Activated CD4-positive, alpha-beta T cell treated with anti-CD3 and anti-CD28 coated beads for 36 hours (primary cell): ENCODE measurements at regions of chr10 and their contacts with region 1.

Region 1: GRCh38 chr10:28709001-28709710 is 31.8 kb downstream of the BAMBI start:
- DNase-seq: no peak
- ATAC-seq: no peak
- H3K4me3 Mint-ChIP-seq: no peak overlapping the region
- H3K27ac Mint-ChIP-seq: no peak overlapping the region
- H3K4me1 Mint-ChIP-seq: no peaks in the 10 kb centered on the region
- H3K27me3 Mint-ChIP-seq: peaks cover 6% of the 10 kb centered on the region

Region 2: DNA sequence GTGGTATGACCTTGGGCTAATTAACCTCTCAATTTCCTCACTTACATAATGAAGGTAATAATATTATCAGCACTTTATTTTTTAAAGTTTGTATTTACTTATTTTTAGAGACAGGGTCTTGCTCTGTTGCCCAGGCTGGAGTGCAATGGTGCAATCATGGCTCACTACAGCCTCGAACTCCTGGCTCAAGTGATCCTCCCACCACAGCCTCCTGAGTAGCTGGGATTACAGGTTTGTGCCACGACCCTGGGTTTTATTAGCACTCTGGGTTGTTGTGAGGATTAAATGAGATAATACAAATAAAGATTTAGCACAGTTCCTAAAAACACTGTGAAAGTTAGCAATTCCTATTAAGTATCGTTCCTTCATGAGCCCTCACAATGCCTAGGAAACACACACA is 17.1 kb before region 1 on chr10:
- CTCF ChIA-PET with region 1: no interaction called
- POLR2A ChIA-PET with region 1: no interaction called
- intact Hi-C with region 1: loop called in 1 of 2 experiments (anchors 1 kb)
- DNase-seq: no peak
- ATAC-seq: no peak
- H3K4me3 Mint-ChIP-seq: no peak overlapping the region
- H3K27ac Mint-ChIP-seq: no peak overlapping the region
- H3K4me1 Mint-ChIP-seq: no peaks in the 10 kb centered on the region
- H3K27me3 Mint-ChIP-seq: peaks cover 16% of the 10 kb centered on the region

Region 3: DNA sequence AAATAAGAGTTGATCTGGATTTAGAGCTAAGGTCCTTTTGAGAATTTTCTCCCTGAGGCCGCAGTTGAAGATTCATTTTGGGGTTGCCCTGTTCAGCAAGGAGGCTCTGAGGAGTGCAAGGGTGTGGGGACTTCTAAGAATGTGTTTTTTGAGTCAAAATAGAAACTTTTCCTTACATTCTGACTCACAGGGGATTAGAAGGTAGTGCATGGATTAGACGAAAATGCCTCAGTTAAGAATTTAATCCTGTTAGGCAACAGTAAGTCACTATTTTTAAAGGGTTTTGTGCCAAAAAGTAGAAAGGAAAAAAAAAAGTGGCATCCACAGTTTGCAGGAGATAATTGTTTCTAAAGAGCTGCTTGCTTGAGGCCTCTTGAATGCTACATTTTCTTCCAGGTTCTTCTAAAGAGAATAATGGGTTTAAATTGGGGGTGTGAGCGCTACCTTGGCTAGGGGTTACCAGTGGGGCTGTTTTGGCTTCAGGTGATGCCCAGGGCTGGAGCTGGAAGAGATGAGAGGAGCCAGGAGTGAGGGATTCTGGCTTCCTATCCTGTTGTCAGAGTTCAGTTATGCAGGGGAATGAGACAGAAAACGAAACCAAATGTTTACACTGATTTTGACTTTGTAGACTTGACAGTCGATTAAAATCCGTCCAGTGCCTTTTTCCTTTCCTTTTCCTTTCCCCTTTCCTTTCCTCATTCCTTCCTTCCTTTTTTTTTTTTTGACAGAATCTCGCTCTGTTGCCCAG is 21.0 kb after region 1 on chr10:
- CTCF ChIA-PET with region 1: no interaction called
- POLR2A ChIA-PET with region 1: no interaction called
- intact Hi-C with region 1: no loop called
- DNase-seq: no peak
- ATAC-seq: no peak
- H3K4me3 Mint-ChIP-seq: no peak overlapping the region
- H3K27ac Mint-ChIP-seq: no peak overlapping the region
- H3K4me1 Mint-ChIP-seq: no peaks in the 10 kb centered on the region
- H3K27me3 Mint-ChIP-seq: peaks cover 2% of the 10 kb centered on the region

Region 4: GRCh38 chr10:29356786-29357330 is 647.7 kb after region 1 on chr10:
- CTCF ChIA-PET with region 1: no interaction called
- POLR2A ChIA-PET with region 1: no interaction called
- intact Hi-C with region 1: no loop called
- DNase-seq: no peak
- ATAC-seq: no peak
- H3K4me3 Mint-ChIP-seq: no peak overlapping the region
- H3K27ac Mint-ChIP-seq: no peak overlapping the region
- H3K4me1 Mint-ChIP-seq: no peaks in the 10 kb centered on the region
- H3K27me3 Mint-ChIP-seq: no peaks in the 10 kb centered on the region